ENCODE measurements at regions of chr3 and their contacts with region 1.

Region 1: DNA sequence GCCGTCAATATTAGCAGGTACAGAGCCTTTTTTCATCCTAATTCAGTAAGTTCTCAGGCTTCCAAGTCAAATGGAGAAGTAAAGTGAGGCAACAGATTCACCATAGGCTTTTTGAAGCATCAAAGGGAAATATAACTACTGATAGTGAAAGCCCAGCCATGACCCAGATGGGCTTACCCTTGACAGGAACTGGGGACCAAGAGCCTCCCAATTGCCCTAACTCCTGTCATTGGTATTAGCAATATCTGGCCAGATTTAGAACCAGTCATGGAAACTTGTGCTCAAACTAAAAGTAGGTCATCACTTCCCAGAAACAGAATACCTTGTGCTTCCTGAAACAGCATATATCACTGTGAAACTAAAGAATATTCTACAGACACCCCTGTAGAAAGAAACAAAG is 33.0 kb downstream of the NME9 start:
- DNase-seq: peak; percentile 74
- H3K4me3 Mint-ChIP-seq: peak overlapping the region; percentile 15
- H3K27ac Mint-ChIP-seq: peak overlapping the region; percentile 88
- H3K4me1 Mint-ChIP-seq: peaks cover 38% of the 10 kb centered on the region
- H3K27me3 Mint-ChIP-seq: no peaks in the 10 kb centered on the region

Region 2: GRCh38 chr3:137477614-137478013 is 819.0 kb before region 1 on chr3:
- CTCF ChIA-PET with region 1: no interaction called
- intact Hi-C with region 1: no loop called
- DNase-seq: no peak
- H3K4me3 Mint-ChIP-seq: no peak overlapping the region
- H3K27ac Mint-ChIP-seq: no peak overlapping the region
- H3K4me1 Mint-ChIP-seq: no peaks in the 10 kb centered on the region
- H3K27me3 Mint-ChIP-seq: no peaks in the 10 kb centered on the region

Region 3: GRCh38 chr3:138314751-138315150 is 18.1 kb after region 1 on chr3:
- CTCF ChIA-PET with region 1: no interaction called
- intact Hi-C with region 1: loop called (anchors 1 kb)
- DNase-seq: no peak
- H3K4me3 Mint-ChIP-seq: no peak overlapping the region
- H3K27ac Mint-ChIP-seq: no peak overlapping the region
- H3K4me1 Mint-ChIP-seq: peaks cover 11% of the 10 kb centered on the region
- H3K27me3 Mint-ChIP-seq: no peaks in the 10 kb centered on the region

Measured in activated naive CD4-positive, alpha-beta T cell treated with anti-CD3 and anti-CD28 coated beads for 36 hours (primary cell).